Caco-2 (cell line): ENCODE measurements at regions of chr14 and their contacts with region 1.

Region 1: DNA sequence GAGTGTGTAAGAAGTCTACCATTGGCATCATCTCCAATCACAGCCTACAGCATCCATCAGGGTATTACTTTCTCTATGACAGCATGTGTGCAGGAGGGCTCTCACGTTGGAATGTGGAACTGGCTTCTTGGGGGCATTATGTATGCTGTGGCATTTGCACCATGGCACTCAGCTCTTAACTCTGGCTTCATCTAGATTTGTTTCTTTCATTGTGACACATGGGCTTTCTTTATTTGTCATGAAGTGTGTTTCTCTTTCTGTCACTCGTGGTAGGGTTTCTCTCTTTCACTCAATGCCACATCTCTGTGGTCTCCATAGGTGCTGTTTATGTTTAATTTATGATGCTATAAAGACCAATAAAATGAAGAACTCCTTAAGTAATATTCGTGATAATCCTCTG is 191.2 kb upstream of the GARIN2 start:
- DNase-seq: no peak
- H3K4me3 ChIP-seq: no peak overlapping the region
- H3K4me3 Mint-ChIP-seq: no peak overlapping the region
- H3K27ac Mint-ChIP-seq: no peak overlapping the region
- H3K4me1 ChIP-seq: no peaks in the 10 kb centered on the region
- H3K4me1 Mint-ChIP-seq: peaks cover 11% of the 10 kb centered on the region
- H3K27me3 ChIP-seq: no peaks in the 10 kb centered on the region
- H3K27me3 Mint-ChIP-seq: no peaks in the 10 kb centered on the region
- CTCF ChIP-seq: no peak

Region 2: GRCh38 chr14:66955159-66955558 is 42.9 kb before region 1 on chr14:
- CTCF ChIA-PET with region 1: no interaction called
- POLR2A ChIA-PET with region 1: no interaction called
- intact Hi-C with region 1: no loop called
- DNase-seq: no peak
- H3K4me3 ChIP-seq: no peak overlapping the region
- H3K4me3 Mint-ChIP-seq: no peak overlapping the region
- H3K27ac Mint-ChIP-seq: no peak overlapping the region
- H3K4me1 ChIP-seq: no peaks in the 10 kb centered on the region
- H3K4me1 Mint-ChIP-seq: no peaks in the 10 kb centered on the region
- H3K27me3 ChIP-seq: no peaks in the 10 kb centered on the region
- H3K27me3 Mint-ChIP-seq: no peaks in the 10 kb centered on the region
- CTCF ChIP-seq: no peak

Region 3: GRCh38 chr14:67018720-67019119 is 20.7 kb after region 1 on chr14:
- CTCF ChIA-PET with region 1: no interaction called
- POLR2A ChIA-PET with region 1: interaction called, 21 read pairs
- intact Hi-C with region 1: no loop called
- DNase-seq: no peak
- H3K4me3 ChIP-seq: no peak overlapping the region
- H3K4me3 Mint-ChIP-seq: no peak overlapping the region
- H3K27ac Mint-ChIP-seq: no peak overlapping the region
- H3K4me1 ChIP-seq: no peaks in the 10 kb centered on the region
- H3K4me1 Mint-ChIP-seq: no peaks in the 10 kb centered on the region
- H3K27me3 ChIP-seq: no peaks in the 10 kb centered on the region
- H3K27me3 Mint-ChIP-seq: no peaks in the 10 kb centered on the region
- CTCF ChIP-seq: no peak